Activated CD4-positive, alpha-beta T cell treated with anti-CD3 and anti-CD28 coated beads, Interleukin-2, amount 10 ng/mL, durations not matched to agents 24 days and 14 days (primary cell): ENCODE measurements at regions of chr14 and their contacts with region 1.

Region 1: DNA sequence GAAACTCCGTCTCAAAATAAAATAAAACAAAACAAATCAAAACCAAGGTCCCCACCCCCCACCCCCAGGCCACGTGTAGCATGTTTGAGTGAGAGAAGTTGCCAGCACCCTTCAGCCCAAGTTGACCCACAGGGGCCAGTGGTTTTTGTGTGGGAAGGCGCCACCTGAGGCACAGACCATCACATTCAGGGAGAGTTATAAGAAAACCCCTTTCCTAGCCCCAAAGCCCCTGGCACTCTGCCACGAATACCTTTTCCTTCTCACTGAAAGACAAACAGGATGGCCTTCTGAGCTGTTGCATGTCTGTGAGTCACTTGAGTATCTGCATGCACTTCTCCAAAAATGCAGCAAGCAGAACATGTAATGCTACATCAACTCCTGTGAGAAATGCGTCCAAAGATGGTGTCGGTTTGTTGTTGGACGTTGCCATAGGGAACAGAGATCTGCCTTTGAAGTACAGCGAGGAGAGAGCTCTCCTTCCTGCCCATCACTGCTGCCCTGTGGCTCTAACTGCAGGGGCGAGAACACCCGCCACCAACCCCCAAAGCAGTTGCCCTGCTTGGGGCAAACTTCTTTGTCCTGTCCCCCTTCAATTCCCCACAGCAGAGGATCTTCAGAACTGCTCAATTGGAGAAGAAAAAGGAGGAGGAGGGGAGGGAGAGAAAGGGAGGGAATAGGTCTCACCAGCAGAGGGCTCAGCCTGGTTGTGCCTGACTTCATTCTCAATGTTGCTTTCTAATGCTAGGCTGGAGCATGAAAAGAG is 2.7 kb upstream of the TRAF3 start:
- DNase-seq: peak; percentile 90
- H3K4me3 Mint-ChIP-seq: peak overlapping the region; percentile 11
- H3K27ac Mint-ChIP-seq: peak overlapping the region; percentile 83
- H3K4me1 Mint-ChIP-seq: peaks cover 29% of the 10 kb centered on the region
- H3K27me3 Mint-ChIP-seq: no peaks in the 10 kb centered on the region

Region 2: GRCh38 chr14:102694530-102695166 is 79.9 kb before region 1 on chr14:
- intact Hi-C with region 1: loop called (anchors 2 kb)
- DNase-seq: peak; percentile 89
- H3K4me3 Mint-ChIP-seq: no peak overlapping the region
- H3K27ac Mint-ChIP-seq: no peak overlapping the region
- H3K4me1 Mint-ChIP-seq: peaks cover 17% of the 10 kb centered on the region
- H3K27me3 Mint-ChIP-seq: no peaks in the 10 kb centered on the region

Region 3: DNA sequence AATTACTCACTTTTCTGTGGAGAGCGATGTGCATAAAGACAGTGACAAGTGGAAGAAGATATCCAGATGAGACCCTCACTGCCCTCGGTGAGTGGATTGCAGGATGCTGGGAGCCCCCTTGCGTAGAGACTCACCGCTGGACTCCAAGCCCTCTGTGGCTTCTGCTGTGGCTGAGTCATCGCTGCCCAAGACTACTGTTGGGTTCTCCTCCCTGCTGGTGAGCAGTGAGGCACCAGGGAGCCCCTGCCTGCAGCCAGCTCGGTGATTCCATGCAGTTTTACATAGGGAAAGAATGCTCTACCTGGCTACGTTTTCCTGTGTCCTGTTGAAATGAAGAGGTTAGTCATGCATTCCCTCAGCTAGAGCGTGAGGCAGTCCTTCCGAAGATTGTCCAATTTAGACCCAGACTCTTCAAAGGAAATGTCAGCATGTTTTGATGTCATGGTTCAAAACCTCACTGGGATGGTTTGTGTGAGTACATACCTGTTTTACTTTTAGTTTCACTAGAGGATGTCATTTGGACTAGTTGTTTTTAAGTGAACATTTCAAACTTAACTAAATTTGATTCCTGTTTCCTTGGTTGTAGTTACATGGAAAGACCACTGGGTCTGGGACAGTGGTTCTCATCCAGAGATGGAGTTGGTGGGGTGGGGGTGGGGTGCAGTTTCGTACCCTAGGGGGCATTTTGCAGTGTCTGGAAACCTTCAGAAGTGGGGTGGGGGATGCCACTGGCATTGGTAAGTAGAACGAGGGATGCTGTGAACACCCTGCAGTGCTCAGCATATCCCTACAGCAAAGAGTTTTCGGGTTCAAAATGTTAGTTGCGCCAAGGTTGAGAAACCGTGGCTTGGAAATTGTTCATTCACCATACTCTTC is 31.0 kb after region 1 on chr14:
- intact Hi-C with region 1: loop called (anchors 1 kb)
- DNase-seq: peak; percentile 85
- H3K4me3 Mint-ChIP-seq: peak overlapping the region; percentile 81
- H3K27ac Mint-ChIP-seq: peak overlapping the region; percentile 97
- H3K4me1 Mint-ChIP-seq: peaks cover 60% of the 10 kb centered on the region
- H3K27me3 Mint-ChIP-seq: no peaks in the 10 kb centered on the region

Region 4: DNA sequence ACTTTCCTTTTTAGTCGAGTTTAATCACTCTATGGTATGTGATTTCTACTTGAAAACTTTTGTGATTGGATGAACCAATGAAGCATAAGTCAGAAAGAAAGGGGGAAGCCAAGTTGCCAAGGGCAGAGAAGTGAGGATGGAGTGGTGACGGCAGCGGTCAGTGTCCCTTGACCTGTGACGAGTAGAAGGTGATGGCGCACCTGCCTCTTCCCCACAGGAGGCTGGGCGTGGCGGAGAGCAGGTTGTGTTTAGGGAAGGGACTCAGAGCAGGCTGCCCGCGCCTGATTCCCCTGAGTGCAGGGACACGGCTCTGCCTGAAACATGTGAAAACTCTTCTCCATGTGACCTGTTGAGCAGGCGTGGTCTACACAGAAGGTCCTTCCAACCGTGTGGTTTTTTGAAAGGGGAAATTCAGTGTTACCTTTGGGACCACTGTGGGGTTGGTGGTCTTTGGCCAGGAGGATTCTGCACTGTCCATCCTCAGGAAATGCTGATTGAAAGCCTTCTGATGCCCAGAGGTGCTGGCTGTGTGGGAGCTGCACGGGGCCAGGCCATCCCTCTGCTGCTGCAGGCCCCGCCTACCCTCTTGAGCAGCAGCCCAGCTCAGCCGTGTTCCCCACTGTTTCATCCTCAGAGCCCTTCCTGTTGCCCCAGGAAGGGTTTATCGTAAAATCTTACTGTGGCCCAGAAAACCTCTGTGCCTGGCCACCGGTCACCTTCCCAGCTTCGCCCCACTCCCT is 124.4 kb after region 1 on chr14:
- intact Hi-C with region 1: loop called (anchors 5 kb)
- DNase-seq: no peak
- H3K4me3 Mint-ChIP-seq: no peak overlapping the region
- H3K27ac Mint-ChIP-seq: peak overlapping the region; percentile 70
- H3K4me1 Mint-ChIP-seq: peaks cover 29% of the 10 kb centered on the region
- H3K27me3 Mint-ChIP-seq: no peaks in the 10 kb centered on the region

Region 5: DNA sequence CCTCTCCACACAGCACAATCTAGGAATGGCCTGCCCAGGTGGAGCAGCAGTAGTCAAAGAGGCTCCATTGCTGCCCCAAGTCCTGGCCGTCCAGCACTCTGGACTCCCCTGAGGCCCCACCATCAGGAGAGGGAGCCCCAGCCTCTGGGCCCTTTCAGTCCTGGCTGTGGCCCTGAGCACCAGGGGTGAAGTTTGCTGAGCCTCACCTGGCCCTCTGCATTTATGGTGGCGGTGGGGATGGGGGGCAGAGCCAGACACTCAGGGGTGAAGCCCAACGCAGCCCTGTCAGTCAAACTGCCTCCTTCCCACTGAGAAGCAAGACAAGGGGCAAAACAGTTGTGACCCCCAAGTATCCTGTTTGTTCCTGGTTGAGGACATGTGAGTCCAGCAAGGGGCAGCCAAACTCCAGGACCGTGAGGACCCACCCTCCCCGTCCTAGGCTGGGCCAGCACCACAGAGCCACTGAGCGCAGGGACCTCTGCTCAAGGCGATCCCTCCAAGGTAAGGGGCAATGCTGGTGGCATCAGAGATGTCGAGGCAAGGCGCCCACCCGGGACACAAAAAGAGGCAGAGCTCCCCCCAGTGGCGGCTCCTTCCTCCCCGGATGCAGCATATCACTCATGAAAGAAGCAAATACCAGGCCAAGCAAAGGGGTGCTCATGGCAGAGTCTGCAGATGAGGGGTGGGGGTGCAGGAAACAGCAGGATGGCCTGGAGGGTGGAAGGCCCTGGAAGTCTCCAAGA is 143.1 kb after region 1 on chr14:
- intact Hi-C with region 1: loop called (anchors 5 kb)
- DNase-seq: peak; percentile 85
- H3K4me3 Mint-ChIP-seq: no peak overlapping the region
- H3K27ac Mint-ChIP-seq: no peak overlapping the region
- H3K4me1 Mint-ChIP-seq: no peaks in the 10 kb centered on the region
- H3K27me3 Mint-ChIP-seq: no peaks in the 10 kb centered on the region